CD8-positive, alpha-beta memory T cell (primary cell): ENCODE measurements at regions of chr3 and their contacts with region 1.

Region 1: DNA sequence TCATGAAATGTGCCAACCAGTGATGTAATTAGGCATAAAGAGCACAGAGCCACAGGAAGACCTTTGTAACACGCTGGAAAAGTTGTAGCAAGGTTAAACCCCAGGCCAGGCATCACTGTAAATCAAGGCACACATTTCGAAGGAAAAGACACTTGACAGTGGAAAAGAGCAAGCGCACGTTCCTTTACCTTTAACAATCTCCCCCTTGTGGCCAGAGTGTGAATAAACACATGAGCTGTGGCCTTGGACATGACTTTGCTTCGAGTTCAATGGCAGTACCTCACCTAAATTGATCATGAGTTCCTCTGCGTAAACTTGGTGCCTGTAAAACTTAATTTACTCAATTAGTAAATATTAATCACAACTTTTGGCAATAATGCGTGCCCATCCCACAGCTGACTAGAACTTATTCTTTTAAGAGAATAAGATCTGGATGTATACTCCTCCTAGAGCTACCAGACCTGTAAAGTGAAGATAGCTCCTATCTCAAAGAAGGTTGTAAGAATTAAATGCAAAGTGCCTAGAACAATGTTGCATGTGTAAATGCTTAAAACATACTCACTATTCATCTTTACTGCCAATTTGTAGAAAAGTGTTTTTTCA is 757.0 kb upstream of the NECTIN3 start:
- DNase-seq: peak; percentile 10 to 72 (median 46)
- H3K4me3 ChIP-seq: no peak overlapping the region
- H3K4me3 Mint-ChIP-seq: no peak overlapping the region
- H3K27ac ChIP-seq: no peak overlapping the region
- H3K27ac Mint-ChIP-seq: peak overlapping the region in 1 of 8 donors; percentile 9
- H3K4me1 ChIP-seq: no peaks in the 10 kb centered on the region
- H3K4me1 Mint-ChIP-seq: peaks cover 5 to 7% (median 6%) of the 10 kb centered on the region in 3 donors
- H3K27me3 ChIP-seq: no peaks in the 10 kb centered on the region
- H3K27me3 Mint-ChIP-seq: peaks cover 0 to 2% of the 10 kb centered on the region in 2 donors

Region 2: GRCh38 chr3:109731620-109732473 is 582.8 kb before region 1 on chr3:
- CTCF ChIA-PET with region 1: interaction called, 14 read pairs
- POLR2A ChIA-PET with region 1: no interaction called
- DNase-seq: peak; percentile 28 to 64 (median 55)
- H3K4me3 ChIP-seq: no peak overlapping the region
- H3K4me3 Mint-ChIP-seq: peak overlapping the region in 1 of 7 donors; percentile 5
- H3K27ac ChIP-seq: no peak overlapping the region
- H3K27ac Mint-ChIP-seq: no peak overlapping the region
- H3K4me1 ChIP-seq: peaks cover 5% of the 10 kb centered on the region
- H3K4me1 Mint-ChIP-seq: peaks cover 9 to 14% (median 12%) of the 10 kb centered on the region in 3 donors
- H3K27me3 ChIP-seq: no peaks in the 10 kb centered on the region
- H3K27me3 Mint-ChIP-seq: peaks cover 0 to 3% of the 10 kb centered on the region in 2 donors

Region 3: GRCh38 chr3:110327870-110328269 is 13.3 kb after region 1 on chr3:
- CTCF ChIA-PET with region 1: interaction called, 12 read pairs
- POLR2A ChIA-PET with region 1: no interaction called
- DNase-seq: no peak
- H3K4me3 ChIP-seq: no peak overlapping the region
- H3K4me3 Mint-ChIP-seq: no peak overlapping the region
- H3K27ac ChIP-seq: no peak overlapping the region
- H3K27ac Mint-ChIP-seq: no peak overlapping the region
- H3K4me1 ChIP-seq: no peaks in the 10 kb centered on the region
- H3K4me1 Mint-ChIP-seq: no peaks in the 10 kb centered on the region
- H3K27me3 ChIP-seq: no peaks in the 10 kb centered on the region
- H3K27me3 Mint-ChIP-seq: peaks cover 0 to 5% of the 10 kb centered on the region in 2 donors

Region 4: DNA sequence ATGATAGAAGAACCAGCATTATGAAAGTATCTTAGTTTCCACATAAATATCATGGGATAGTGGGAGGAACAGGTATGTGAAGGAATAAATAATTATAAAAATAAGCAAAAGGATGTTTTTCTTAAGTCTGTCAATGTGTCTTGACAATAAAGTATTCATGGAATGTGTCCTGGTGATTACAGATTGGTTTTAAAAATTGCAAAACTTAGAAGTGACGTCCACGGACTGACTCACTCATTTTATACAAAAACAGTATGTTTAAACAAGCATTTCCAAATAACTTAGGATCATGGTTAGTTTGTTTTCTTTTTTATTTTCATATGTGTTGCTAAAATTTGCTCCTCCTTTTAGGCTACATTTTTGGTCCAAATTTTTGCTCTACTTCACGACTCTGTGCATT is 70.0 kb after region 1 on chr3:
- CTCF ChIA-PET with region 1: no interaction called
- POLR2A ChIA-PET with region 1: no interaction called
- DNase-seq: no peak
- H3K4me3 ChIP-seq: no peak overlapping the region
- H3K4me3 Mint-ChIP-seq: no peak overlapping the region
- H3K27ac ChIP-seq: no peak overlapping the region
- H3K27ac Mint-ChIP-seq: no peak overlapping the region
- H3K4me1 ChIP-seq: no peaks in the 10 kb centered on the region
- H3K4me1 Mint-ChIP-seq: no peaks in the 10 kb centered on the region
- H3K27me3 ChIP-seq: no peaks in the 10 kb centered on the region
- H3K27me3 Mint-ChIP-seq: no peaks in the 10 kb centered on the region